Dendritic cell treated with granulocyte-macrophage colony-stimulating factor and Interleukin-4, amounts not matched to agents 40 ng/mL and 50 ng/mL, for 4 days (primary cell): ENCODE measurements at regions of chr2 and their contacts with region 1.

Region 1: DNA sequence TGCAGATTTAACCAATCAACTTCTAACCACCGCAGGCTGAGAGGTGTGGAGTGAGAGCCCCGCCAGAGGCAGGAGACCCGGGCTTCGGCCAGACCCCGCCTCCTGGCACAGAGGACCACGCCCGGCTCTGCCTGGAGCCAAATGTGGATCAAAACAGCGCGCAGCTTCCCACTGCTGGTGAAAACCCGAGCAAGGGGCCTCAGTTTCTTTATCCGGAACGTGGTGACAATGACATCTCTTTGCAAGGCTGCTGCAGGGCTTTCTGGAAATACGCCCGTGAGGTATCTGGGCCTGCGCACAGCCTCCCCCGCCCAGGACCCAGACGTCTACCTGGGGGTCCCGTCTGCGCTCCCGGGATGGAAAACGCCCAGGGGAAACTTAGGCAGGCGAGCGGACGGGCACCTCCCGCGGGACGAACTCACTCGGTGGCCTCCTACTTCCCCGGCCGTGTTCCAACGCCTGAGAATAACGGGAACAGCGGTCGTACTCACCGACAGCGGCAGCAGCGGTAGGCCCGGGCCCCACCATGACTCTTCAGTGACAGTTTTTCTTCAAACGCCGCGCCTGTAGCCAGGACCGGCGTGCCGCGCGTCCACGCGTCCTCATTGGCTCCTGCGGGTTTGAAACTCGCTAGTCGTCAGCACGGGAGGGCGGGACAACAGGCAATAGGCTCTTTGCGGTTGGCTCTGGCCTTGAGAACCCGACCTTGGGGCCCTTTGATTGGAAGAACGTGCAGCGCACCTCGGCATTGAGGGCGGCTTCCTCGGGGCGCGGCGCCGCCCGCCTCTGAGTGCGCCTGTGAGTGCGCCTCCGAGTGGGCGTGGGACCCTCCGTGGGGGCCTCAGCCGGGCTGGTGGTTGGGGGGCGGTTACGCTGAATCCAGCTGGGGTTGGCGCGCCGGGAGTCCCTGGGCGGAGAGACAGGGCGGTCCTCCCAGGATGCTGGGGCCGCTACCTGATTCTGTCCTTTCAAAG is at the start of gene CKAP2L:
- H3K4me3 Mint-ChIP-seq: peak within 1 kb of the TSS; percentile 97
- H3K27ac Mint-ChIP-seq: peak within 1 kb of the TSS; percentile 82
- H3K4me1 Mint-ChIP-seq: peaks cover 50% of the 10 kb centered on the region
- H3K27me3 Mint-ChIP-seq: no peaks in the 10 kb centered on the region

Region 2: GRCh38 chr2:112811841-112812306 is 47.5 kb after region 1 on chr2:
- intact Hi-C with region 1: loop called (anchors 10 kb)
- H3K4me3 Mint-ChIP-seq: no peak overlapping the region
- H3K27ac Mint-ChIP-seq: peak overlapping the region; percentile 33
- H3K4me1 Mint-ChIP-seq: peaks cover 33% of the 10 kb centered on the region
- H3K27me3 Mint-ChIP-seq: no peaks in the 10 kb centered on the region

Region 3: DNA sequence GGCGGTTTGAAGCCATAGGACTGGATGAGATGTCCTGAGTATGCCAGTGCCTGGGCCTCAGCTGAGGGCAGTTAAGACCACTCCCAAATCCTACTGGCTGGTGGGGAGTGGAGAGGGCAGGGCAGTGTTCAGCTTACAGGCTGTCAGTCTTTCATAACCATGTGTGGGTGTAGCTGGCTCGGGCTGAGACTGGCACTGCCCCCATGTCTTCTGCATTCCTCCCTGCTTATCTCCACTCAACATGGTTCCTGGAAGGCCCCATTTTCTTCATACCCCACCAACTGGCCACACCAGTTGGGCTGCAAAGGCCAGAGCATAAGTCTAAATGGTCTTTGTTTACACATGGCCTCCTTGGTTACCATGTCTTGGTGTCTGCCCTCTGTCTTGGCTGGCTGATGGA is 129.4 kb after region 1 on chr2:
- intact Hi-C with region 1: no loop called
- H3K4me3 Mint-ChIP-seq: no peak overlapping the region
- H3K27ac Mint-ChIP-seq: no peak overlapping the region
- H3K4me1 Mint-ChIP-seq: peaks cover 7% of the 10 kb centered on the region
- H3K27me3 Mint-ChIP-seq: peaks cover 2% of the 10 kb centered on the region